ENCODE measurements at regions of chr5 and their contacts with region 1.

Region 1: GRCh38 chr5:35319333-35320002 is 89.2 kb upstream of the PRLR start:
- DNase-seq: peak; percentile 94
- H3K4me3 Mint-ChIP-seq: no peak overlapping the region
- H3K27ac Mint-ChIP-seq: peak overlapping the region; percentile 24
- H3K4me1 Mint-ChIP-seq: peaks cover 14% of the 10 kb centered on the region
- H3K27me3 Mint-ChIP-seq: peaks cover 24% of the 10 kb centered on the region

Region 2: DNA sequence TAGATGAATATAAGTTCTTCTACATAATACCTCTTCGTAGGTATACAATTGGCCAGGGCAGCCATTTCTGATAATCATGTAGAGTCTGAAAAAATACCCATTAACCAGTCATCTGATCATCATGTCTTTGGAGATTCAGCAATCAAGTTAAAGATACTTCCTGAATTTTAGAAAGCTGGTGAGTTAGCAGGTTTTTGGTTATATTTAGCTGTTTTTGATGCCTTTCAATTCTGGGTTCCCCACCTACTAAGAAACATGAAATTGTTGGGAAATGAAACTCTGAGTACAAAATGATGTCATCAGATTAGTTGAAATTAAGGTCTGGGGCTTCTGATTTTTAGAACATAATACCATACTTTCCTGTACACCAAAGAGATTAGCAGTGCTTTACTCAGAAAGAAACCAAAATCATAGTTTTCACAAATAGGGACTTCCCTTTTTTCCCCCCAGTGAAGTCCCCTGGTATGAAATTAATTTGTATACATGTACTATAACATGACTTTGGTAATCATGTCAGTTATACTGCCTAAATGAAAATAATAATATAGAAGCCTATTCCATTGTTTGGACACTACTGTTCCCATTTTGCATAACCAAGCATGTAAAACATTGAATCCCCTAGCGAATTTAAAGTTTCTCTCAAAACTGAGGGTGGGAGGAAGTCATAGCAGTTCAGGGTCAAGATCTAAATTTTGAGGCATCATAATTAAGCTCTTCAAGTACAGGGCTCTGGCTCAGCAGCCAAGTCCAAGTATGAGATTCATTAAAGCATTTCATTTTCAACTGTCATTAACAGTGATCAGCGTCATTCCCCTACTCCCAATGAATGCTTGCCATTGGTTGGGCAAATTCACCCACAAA is 107.1 kb before region 1 on chr5:
- CTCF ChIA-PET with region 1: no interaction called
- intact Hi-C with region 1: loop called (anchors 1 kb)
- DNase-seq: no peak
- H3K4me3 Mint-ChIP-seq: no peak overlapping the region
- H3K27ac Mint-ChIP-seq: no peak overlapping the region
- H3K4me1 Mint-ChIP-seq: peaks cover 8% of the 10 kb centered on the region
- H3K27me3 Mint-ChIP-seq: peaks cover 9% of the 10 kb centered on the region

Region 3: GRCh38 chr5:35478856-35479682 is 159.6 kb after region 1 on chr5:
- CTCF ChIA-PET with region 1: no interaction called
- intact Hi-C with region 1: loop called (anchors 5 kb)
- DNase-seq: no peak
- H3K4me3 Mint-ChIP-seq: peak overlapping the region; percentile 51
- H3K27ac Mint-ChIP-seq: peak overlapping the region; percentile 81
- H3K4me1 Mint-ChIP-seq: peaks cover 9% of the 10 kb centered on the region
- H3K27me3 Mint-ChIP-seq: no peaks in the 10 kb centered on the region

Region 4: GRCh38 chr5:35672995-35673394 is 353.5 kb after region 1 on chr5:
- CTCF ChIA-PET with region 1: no interaction called
- intact Hi-C with region 1: loop called (anchors 1 kb)
- DNase-seq: peak; percentile 73
- H3K4me3 Mint-ChIP-seq: no peak overlapping the region
- H3K27ac Mint-ChIP-seq: peak overlapping the region; percentile 75
- H3K4me1 Mint-ChIP-seq: peaks cover 63% of the 10 kb centered on the region
- H3K27me3 Mint-ChIP-seq: no peaks in the 10 kb centered on the region